ENCODE measurements at regions of chr17 and their contacts with region 1.

Region 1: GRCh38 chr17:17919169-17920107 is 52.8 kb downstream of the TOM1L2 start:
- DNase-seq: peak; percentile 62 to 78
- H3K4me3 ChIP-seq: no peak overlapping the region
- H3K27ac ChIP-seq: peak overlapping the region; percentile 24; the same call in 1 of the 2 replicates
- H3K4me1 ChIP-seq: peaks cover 64% of the 10 kb centered on the region
- H3K27me3 ChIP-seq: no peaks in the 10 kb centered on the region
- CTCF ChIP-seq: peak; percentile 90

Region 2: GRCh38 chr17:17496189-17497064 is 423.0 kb before region 1 on chr17 and contains the start of gene RASD1:
- CTCF ChIA-PET with region 1: interaction called, 3 read pairs
- POLR2A ChIA-PET with region 1: no interaction called
- intact Hi-C with region 1: loop called (anchors 10 kb)
- DNase-seq: peak in 1 of 2 experiments; percentile 86
- H3K4me3 ChIP-seq: no peak within 1 kb of the TSS; the same call in 1 of the 2 replicates
- H3K27ac ChIP-seq: no peak within 1 kb of the TSS
- H3K4me1 ChIP-seq: no peaks in the 10 kb centered on the region; the same call in 1 of the 2 replicates
- H3K27me3 ChIP-seq: no peaks in the 10 kb centered on the region
- CTCF ChIP-seq: peak; percentile 88
- total RNA-seq, gene RASD1: 1.0 and 1.2 TPM in 2 replicates

Region 3: DNA sequence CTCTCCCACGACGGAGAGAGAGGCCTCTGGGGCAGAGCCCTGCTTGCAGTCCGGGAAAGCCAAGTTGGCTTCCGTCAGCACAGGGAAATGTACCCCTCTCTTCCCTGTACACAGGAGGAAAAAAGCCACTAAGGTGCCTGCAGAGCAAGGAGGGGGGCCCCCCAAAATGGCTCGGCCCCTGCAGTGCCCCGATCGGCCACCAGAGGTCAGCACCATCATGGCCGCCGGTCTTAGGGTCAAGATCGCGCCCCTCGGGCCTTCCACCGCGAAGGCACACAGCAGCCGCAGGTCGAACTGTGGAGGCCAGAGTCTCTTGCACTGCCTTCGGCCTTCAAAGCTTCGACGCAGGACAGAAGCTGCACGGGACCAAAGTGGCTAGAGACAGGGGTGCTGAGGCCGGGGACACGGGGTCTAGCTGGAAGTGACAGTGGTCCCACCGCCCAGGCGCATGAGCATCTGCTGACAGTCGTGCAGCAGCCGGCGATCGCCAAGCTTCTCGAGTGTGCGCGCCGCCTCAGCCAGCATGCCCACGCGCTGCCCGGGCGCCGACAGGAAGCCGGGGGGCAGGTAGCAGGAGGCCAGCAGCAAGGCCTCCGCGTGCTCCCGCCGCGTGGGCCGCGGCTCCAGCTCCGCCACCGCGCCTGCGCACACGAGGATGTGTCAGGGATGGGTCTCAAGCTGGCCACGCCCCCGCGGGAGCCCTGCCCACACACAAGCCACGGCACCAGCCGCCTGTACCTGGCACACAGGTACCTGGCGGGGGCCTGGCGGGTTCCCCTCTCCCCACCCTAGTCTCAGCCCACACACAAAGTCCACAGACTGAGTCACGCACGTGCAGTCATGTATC is 107.0 kb before region 1 on chr17:
- CTCF ChIA-PET with region 1: no interaction called
- POLR2A ChIA-PET with region 1: interaction called, 15 read pairs
- intact Hi-C with region 1: loop called (anchors 2 kb)
- DNase-seq: peak; percentile 49 to 76
- H3K4me3 ChIP-seq: no peak overlapping the region
- H3K27ac ChIP-seq: 0 out of 2 replicates have a peak overlapping the region, but pooled peaks have one; percentile 8
- H3K4me1 ChIP-seq: peaks cover 16% of the 10 kb centered on the region; the same call in 1 of the 2 replicates
- H3K27me3 ChIP-seq: no peaks in the 10 kb centered on the region
- CTCF ChIP-seq: peak; percentile 100

Region 4: DNA sequence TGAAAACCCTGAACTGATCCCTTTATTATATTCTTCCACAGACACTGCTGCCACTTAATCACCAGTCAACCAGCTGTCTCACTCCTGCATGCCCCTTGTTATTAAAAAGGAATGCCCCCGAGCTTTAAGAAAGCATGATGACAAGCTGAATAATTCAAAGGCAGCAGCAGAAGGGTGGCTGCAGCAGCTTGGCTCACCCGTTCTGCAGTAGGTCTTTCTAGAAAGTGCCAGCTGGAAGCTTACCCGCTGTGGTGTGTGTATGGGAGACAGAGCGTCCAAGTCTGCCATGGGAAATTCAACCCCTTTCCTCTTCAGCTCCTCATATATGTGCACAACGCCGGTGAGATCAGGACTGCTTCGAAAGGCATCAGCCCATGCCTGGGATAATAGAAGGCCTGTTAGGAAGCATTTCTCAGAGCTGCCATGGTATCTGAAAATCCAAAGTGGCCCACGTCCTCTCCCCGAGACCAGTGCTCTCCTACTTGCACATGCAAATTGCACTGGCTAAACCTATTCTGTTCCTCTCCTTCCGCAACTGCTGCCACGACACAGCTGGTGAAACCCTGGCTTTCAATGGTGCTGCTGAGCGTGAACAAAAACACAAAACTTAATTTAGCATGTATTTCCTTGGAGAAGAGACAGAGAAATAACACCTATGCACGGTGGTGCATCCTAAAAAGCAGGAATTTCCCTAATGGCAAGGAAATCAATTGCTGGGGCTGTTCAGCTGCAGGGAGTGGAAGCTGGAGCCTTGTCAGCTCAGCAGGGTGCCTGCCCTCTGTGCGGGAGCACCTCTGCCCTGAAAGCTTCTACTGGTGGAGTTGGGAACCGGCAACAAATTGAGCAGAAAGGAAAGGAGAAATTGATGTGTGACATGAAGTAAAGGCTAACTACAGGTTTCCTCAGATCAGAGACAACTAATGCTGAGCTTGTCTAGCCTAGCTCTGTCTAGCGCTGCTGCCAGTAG is 34.8 kb before region 1 on chr17:
- CTCF ChIA-PET with region 1: interaction called, 16 read pairs
- POLR2A ChIA-PET with region 1: no interaction called
- intact Hi-C with region 1: no loop called
- DNase-seq: no peak
- H3K4me3 ChIP-seq: no peak overlapping the region
- H3K27ac ChIP-seq: no peak overlapping the region
- H3K4me1 ChIP-seq: no peaks in the 10 kb centered on the region
- H3K27me3 ChIP-seq: no peaks in the 10 kb centered on the region
- CTCF ChIP-seq: no peak

Region 5: DNA sequence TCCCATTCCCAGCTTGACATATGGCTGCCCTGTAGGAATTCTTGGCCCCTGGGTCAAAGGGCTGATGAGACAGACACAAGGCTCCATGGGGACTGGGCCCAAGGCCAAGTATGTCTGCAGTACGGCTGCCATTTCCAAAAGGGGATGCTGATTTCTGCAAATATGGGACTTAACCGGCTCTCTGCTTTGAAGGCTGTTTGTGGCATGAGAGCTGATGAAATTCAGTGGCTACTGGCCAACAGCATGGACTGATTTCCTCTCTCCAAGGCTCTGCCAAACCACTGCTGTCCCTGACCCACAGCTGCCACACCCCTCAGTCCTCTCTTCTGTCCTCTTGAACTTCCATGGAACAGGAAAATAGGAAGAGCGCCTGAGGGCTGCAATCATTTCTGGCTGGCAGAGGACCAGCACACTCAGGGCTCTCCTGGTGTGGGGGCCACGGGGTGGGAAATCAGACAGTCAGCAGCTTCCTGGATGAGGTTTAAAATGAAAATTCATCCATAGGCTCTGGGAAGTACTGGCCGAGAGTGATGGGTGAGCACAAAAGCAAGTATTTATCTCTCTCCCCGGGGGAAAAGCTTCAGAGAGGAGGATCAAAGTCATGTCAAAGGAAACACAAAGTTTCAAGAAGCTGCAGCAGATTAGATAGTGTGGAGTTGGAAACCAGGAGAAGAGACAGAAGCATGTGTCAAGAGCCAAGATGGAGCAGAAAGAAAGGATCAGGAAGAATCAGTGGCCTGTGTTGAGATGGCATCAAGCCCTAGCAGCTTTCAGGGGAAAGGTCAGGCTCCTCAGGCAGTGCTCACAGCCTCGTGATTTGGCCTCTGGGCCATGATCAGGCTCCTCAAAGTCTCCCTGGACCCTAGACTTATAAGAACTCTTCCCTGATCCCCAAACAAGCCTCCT is 18.6 kb before region 1 on chr17:
- CTCF ChIA-PET with region 1: interaction called, 11 read pairs
- POLR2A ChIA-PET with region 1: no interaction called
- intact Hi-C with region 1: loop called (anchors 1 kb)
- DNase-seq: peak; percentile 85
- H3K4me3 ChIP-seq: no peak overlapping the region
- H3K27ac ChIP-seq: peak overlapping the region; percentile 63
- H3K4me1 ChIP-seq: peaks cover 36% of the 10 kb centered on the region
- H3K27me3 ChIP-seq: no peaks in the 10 kb centered on the region
- CTCF ChIP-seq: no peak

Region 6: GRCh38 chr17:17972126-17972951 is 52.9 kb after region 1 on chr17 and contains the starts of genes DRC3 and TOM1L2:
- CTCF ChIA-PET with region 1: interaction called, 7 read pairs
- POLR2A ChIA-PET with region 1: interaction called, 5 read pairs
- intact Hi-C with region 1: loop called (anchors 1 kb)
- DNase-seq: peak; percentile 100
- H3K4me3 ChIP-seq: peak within 1 kb of the TSS; percentile 82
- H3K27ac ChIP-seq: peak within 1 kb of the TSS; percentile 40
- H3K4me1 ChIP-seq: peaks cover 28% of the 10 kb centered on the region
- H3K27me3 ChIP-seq: no peaks in the 10 kb centered on the region
- CTCF ChIP-seq: no peak
- total RNA-seq, gene DRC3: 7.2 and 15.2 TPM in 2 replicates
- total RNA-seq, gene TOM1L2: 68.5 and 71.8 TPM in 2 replicates

Region 7: DNA sequence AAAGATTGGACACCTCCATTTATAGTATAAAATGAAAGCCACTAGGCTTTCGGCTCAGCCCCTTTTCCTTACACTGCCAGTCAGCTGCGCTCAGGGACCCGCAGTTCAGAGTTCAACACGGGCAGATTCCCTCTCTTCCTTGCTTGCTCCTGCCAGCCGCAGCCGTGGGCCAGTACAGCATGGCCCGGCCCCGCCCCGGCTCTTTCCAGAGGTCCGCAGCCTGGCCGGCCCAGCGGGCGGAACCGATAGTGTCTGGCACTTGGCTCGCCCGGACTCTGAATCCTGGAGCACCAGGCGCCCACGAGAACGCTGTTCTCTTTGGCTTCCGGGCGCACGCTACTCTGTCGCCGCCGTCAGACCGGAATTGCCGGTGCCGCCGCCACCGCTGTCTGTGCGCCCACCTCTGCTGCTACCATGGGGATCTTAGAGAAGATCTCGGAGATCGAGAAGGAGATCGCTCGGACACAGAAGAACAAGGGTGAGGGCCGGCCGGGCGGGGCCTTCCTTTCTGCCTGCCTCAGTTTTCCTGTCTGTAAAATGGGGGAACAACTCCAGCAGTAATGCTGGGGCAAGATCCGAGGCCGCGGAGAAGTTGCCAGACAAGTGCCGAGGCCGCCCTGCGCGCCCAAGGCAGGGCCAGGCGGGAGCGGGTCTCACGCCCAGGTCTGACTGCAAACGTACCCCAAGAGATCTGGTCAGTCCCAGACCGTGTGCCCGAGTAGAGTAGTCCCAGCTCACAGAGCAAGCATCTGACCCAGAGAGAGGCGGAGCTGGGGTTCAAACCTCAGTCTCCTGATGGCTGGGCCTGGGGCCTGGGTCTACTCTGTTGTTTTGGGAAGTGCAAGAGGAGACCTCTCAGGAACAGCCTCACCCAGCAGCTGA is 168.4 kb after region 1 on chr17 and contains the start of gene DRG2:
- CTCF ChIA-PET with region 1: no interaction called
- POLR2A ChIA-PET with region 1: no interaction called
- intact Hi-C with region 1: no loop called
- DNase-seq: peak; percentile 77 to 97
- H3K4me3 ChIP-seq: peak within 1 kb of the TSS; percentile 94
- H3K27ac ChIP-seq: peak within 1 kb of the TSS; percentile 38
- H3K4me1 ChIP-seq: peaks cover 10% of the 10 kb centered on the region
- H3K27me3 ChIP-seq: no peaks in the 10 kb centered on the region
- CTCF ChIP-seq: no peak; the same call in 1 of the 2 replicates
- total RNA-seq, gene DRG2: 62.4 and 66.9 TPM in 2 replicates

Region 8: DNA sequence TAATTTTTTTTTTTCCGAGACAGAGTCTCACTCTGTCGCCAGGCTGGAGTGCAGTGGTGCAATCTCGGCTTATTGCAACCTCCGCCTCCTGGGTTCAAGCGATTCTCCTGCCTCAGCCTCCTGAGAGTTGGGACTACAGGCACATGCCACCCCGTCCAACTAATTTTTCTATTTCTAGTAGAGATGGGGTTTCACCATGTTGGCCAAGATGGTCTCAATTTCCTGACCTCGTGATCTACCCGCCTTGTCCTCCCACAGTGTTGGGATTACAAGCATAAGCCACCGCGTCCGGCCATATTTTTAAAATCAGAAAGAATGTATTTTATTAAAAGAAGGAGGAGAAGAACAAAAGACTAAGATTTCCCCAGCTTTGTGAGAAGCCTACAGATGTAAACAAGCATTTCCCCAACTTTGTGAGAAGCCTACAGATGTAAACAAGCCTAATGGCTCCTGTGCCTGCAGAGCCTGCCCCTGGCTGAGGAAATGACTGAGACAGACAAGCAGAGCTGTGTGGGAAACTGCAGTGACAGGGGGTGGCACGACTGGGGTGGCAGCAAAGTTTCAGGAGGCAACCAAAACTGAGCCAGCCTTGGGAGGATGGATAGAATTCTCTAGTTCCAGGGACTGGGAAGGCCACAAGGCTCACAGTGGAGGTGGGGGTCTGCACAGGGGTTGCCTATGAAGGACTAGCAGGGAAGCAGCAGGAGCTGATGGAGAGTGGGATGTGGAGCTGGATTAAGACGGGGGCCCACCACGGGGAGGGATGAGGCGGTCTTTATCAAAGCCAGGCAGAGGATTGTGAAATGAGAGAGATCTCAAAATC is 372.5 kb after region 1 on chr17:
- CTCF ChIA-PET with region 1: no interaction called
- POLR2A ChIA-PET with region 1: no interaction called
- intact Hi-C with region 1: no loop called
- DNase-seq: no peak
- H3K4me3 ChIP-seq: no peak overlapping the region
- H3K27ac ChIP-seq: no peak overlapping the region
- H3K4me1 ChIP-seq: no peaks in the 10 kb centered on the region
- H3K27me3 ChIP-seq: no peaks in the 10 kb centered on the region
- CTCF ChIP-seq: no peak

Region 9: GRCh38 chr17:19377602-19378392 is 1458.4 kb after region 1 on chr17:
- CTCF ChIA-PET with region 1: no interaction called
- POLR2A ChIA-PET with region 1: interaction called, 12 read pairs
- intact Hi-C with region 1: no loop called
- DNase-seq: peak; percentile 97 to 100
- H3K4me3 ChIP-seq: peak overlapping the region; percentile 79
- H3K27ac ChIP-seq: peak overlapping the region; percentile 79
- H3K4me1 ChIP-seq: peaks cover 19% of the 10 kb centered on the region
- H3K27me3 ChIP-seq: no peaks in the 10 kb centered on the region
- CTCF ChIP-seq: 0 out of 2 replicates have a peak, but pooled peaks have one; percentile 21